B cell (primary cell): ENCODE measurements at regions of chr5 and their contacts with region 1.

Region 1: DNA sequence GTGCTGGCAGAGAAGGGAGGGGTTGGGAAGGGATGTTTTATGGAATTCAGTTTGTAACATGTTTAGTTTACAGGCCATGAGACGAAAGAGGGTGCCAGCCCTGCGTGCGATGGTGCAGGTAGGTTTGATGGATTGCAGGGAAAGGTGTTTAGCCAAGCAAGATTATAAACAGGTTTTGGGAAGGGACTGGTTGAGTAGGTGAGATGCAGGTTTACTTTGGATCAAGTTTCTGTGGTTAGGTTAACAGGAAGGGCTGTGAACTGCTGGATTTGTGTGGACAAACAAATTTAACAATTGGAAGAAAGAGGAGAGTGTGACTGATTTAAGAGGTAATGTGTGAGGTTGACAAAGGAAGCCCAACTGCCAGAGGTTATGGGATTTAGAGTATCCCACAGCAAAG is 32.6 kb upstream of the GPX3 start:
- DNase-seq: no peak
- ATAC-seq: no peak
- H3K4me3 ChIP-seq: no peak overlapping the region
- H3K4me3 Mint-ChIP-seq: no peak overlapping the region
- H3K27ac ChIP-seq: no peak overlapping the region
- H3K27ac Mint-ChIP-seq: no peak overlapping the region
- H3K4me1 ChIP-seq: no peaks in the 10 kb centered on the region
- H3K4me1 Mint-ChIP-seq: no peaks in the 10 kb centered on the region
- H3K27me3 ChIP-seq: no peaks in the 10 kb centered on the region
- H3K27me3 Mint-ChIP-seq: peaks cover 6% of the 10 kb centered on the region
- CTCF ChIP-seq: no peak

Region 2: GRCh38 chr5:151315998-151316597 is 328.4 kb after region 1 on chr5:
- CTCF ChIA-PET with region 1: no interaction called
- POLR2A ChIA-PET with region 1: interaction called, 18 read pairs
- intact Hi-C with region 1: no loop called
- DNase-seq: peak; percentile 65
- ATAC-seq: peak; percentile 76
- H3K4me3 ChIP-seq: no peak overlapping the region
- H3K4me3 Mint-ChIP-seq: no peak overlapping the region
- H3K27ac ChIP-seq: no peak overlapping the region
- H3K27ac Mint-ChIP-seq: no peak overlapping the region
- H3K4me1 ChIP-seq: peaks cover 9 to 16% of the 10 kb centered on the region in 2 donors
- H3K4me1 Mint-ChIP-seq: peaks cover 10% of the 10 kb centered on the region
- H3K27me3 ChIP-seq: no peaks in the 10 kb centered on the region
- H3K27me3 Mint-ChIP-seq: no peaks in the 10 kb centered on the region
- CTCF ChIP-seq: peak; percentile 95